Ovary (tissue), 10 donors: ENCODE measurements at regions of chr7 and their contacts with region 1.

Region 1: DNA sequence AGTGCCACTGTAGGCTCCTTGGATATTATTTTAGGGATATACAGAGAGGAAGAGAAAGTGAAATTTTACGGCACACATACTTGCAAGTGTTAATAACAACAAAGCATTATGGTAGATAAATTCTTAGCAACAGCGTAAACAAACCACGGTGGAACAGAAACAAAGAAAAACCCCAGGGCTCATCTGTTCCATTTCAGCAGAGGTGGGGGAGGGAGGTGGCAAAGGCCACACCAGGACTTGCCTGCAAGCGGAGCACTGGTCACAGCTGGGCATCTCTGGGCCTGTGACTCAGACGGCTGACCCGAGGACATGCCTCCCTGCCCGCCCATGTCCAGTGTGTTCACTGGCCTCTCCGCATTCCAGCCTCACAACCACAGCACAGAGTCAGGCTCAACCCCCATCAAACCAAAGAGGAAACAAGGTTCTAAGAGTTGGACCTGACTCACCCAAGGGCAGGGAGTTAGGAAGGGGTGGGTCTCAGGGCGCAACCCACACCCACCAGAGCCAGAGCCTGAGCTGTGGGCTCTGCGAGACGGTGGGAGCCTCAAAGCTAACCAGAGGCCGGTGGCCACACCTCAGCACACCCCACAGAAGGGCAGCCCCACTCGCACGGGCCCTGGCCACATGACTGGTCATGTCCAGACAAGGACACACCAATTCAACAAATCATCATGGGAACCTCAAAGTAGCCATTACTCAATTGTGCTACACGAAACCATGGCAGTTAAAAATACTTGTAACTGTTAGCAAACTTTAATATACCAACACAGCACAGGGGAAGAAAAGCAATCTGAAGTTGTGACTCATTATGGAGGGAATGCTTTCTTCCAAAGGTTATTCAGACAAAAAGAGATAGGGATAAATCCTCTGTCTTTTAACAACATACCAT is 10.7 kb downstream of the ESYT2 start:
- DNase-seq: peak; percentile 77 to 85 (median 79)
- H3K4me3 ChIP-seq: peak overlapping the region; percentile 31
- H3K27ac ChIP-seq: peak overlapping the region; percentile 66 to 91
- H3K4me1 ChIP-seq: peaks cover 34% of the 10 kb centered on the region
- H3K27me3 ChIP-seq: no peaks in the 10 kb centered on the region
- CTCF ChIP-seq: no peak
- EP300 ChIP-seq: no peak
- POLR2A ChIP-seq: peak; percentile 23

Region 2: GRCh38 chr7:158734861-158735260 is 83.7 kb before region 1 on chr7:
- intact Hi-C with region 1: loop called in 1 of 4 experiments (anchors 10 kb)
- DNase-seq: no peak
- H3K4me3 ChIP-seq: no peak overlapping the region
- H3K27ac ChIP-seq: no peak overlapping the region
- H3K4me1 ChIP-seq: peaks cover 3% of the 10 kb centered on the region
- H3K27me3 ChIP-seq: no peaks in the 10 kb centered on the region
- CTCF ChIP-seq: no peak
- EP300 ChIP-seq: no peak
- POLR2A ChIP-seq: no peak

Region 3: DNA sequence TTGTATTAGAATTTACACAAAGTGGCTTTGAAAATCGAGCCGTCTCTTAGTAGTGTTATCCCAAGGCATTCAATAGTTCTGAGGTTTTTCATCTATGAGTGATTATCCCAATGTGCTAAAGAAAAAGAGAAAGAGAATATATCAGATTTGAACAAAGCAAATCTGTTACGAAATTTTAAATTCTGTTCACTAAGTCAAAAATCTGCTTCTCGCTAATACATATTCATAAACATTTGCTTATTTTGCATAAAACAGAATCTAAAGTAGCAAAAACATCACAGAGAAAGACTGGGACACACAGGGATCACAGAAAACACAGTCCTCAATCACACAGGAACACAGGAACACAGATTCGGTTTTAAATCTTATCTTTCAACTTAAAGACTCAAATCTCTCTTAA is 17.3 kb before region 1 on chr7:
- intact Hi-C with region 1: loop called in 1 of 4 experiments (anchors 2 kb)
- DNase-seq: no peak
- H3K4me3 ChIP-seq: no peak overlapping the region
- H3K27ac ChIP-seq: no peak overlapping the region
- H3K4me1 ChIP-seq: peaks cover 11% of the 10 kb centered on the region
- H3K27me3 ChIP-seq: no peaks in the 10 kb centered on the region
- CTCF ChIP-seq: no peak
- EP300 ChIP-seq: no peak
- POLR2A ChIP-seq: no peak

Region 4: DNA sequence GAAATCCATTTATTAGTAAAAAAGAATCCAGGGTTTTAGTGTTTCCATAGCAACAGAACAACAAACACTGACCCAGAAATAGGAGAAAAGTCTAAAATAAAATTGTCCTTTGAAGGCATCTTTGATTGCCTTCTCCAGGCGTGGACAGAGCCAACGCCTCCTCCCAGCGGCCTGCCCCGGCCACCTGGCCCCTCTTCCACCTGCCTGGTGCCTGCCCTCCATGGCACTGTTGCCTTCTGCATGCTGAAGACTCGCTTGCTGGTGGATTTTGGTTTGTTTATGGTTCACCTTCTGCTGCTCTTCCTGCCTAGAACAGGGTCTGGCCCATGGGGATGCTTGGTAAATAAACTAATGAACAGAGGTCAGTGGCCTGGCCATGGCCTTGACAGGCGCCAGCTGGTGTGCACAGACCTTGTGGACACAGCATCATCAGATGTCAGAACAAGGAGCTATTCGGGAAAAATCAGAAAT is 145.2 kb after region 1 on chr7:
- intact Hi-C with region 1: no loop called
- DNase-seq: no peak
- H3K4me3 ChIP-seq: no peak overlapping the region
- H3K27ac ChIP-seq: no peak overlapping the region
- H3K4me1 ChIP-seq: peaks cover 10% of the 10 kb centered on the region
- H3K27me3 ChIP-seq: no peaks in the 10 kb centered on the region
- CTCF ChIP-seq: no peak
- EP300 ChIP-seq: no peak
- POLR2A ChIP-seq: no peak